ENCODE measurements at regions of chr21 and their contacts with region 1.

Region 1: GRCh38 chr21:45019076-45019956 is 55.1 kb upstream of the ADARB1 start:
- DNase-seq: peak in 4 of 5 donors; percentile 30 to 64 (median 57)
- ATAC-seq: peak in 3 of 4 donors; percentile 28 to 68 (median 46)
- H3K4me3 ChIP-seq: peak overlapping the region; percentile 7 to 66 (median 46)
- H3K27ac ChIP-seq: peak overlapping the region in 9 of 12 donors; percentile 21 to 83 (median 57)
- H3K4me1 ChIP-seq: peaks cover 0 to 26% (median 11%) of the 10 kb centered on the region in 12 donors
- H3K27me3 ChIP-seq: peaks cover 0 to 30% (median 0%) of the 10 kb centered on the region in 9 donors
- CTCF ChIP-seq: no peak
- POLR2A ChIP-seq: no peak

Region 2: DNA sequence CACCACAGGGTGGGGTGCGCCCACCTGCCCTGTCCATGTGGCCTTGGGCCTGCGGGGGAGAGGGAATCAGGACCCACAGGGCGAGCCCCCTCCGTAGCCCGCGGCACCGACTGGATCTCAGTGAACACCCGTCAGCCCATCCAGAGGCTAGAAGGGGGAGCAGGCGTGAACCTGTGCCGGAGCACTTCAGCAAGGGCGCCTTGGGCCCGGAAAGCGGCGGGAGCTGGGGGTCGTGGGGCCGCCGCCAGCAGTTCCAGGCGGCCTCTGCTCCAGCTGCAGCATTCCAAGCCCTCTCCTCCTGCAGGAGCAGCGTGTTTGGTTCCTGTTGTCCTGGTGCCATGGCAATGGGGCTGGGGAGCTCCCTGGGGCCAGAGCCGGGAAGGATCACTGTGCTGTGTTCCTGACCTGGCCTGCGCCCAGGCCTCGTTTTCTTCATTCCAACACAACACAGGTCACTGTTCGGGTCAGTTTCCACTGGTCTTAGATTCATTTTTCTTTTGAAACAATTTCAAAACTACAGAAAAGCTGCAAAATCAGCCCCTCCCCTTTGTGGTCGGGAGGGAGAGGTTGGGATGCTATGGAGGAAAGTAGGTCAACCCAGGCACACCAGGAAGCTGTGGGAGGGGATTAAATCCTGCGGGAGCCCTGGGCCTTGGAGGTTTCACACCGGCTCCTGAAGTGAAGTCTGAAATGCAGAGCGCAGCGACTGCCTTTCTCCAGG is 60.7 kb before region 1 on chr21:
- intact Hi-C with region 1: loop called in 1 of 10 experiments (anchors 5 kb)
- DNase-seq: peak; percentile 82 to 92 (median 88)
- ATAC-seq: peak; percentile 65 to 83 (median 66)
- H3K4me3 ChIP-seq: peak overlapping the region in 8 of 12 donors; percentile 11 to 30 (median 25)
- H3K27ac ChIP-seq: peak overlapping the region; percentile 24 to 86 (median 76)
- H3K4me1 ChIP-seq: peaks cover 13 to 92% (median 60%) of the 10 kb centered on the region in 12 donors
- H3K27me3 ChIP-seq: no peaks in the 10 kb centered on the region
- CTCF ChIP-seq: no peak
- POLR2A ChIP-seq: peak in 1 of 2 donors; percentile 36

Region 3: GRCh38 chr21:45050786-45051489 is 31.6 kb after region 1 on chr21:
- intact Hi-C with region 1: no loop called
- DNase-seq: no peak
- ATAC-seq: no peak
- H3K4me3 ChIP-seq: no peak overlapping the region
- H3K27ac ChIP-seq: no peak overlapping the region
- H3K4me1 ChIP-seq: peaks cover 0 to 6% (median 0%) of the 10 kb centered on the region in 12 donors
- H3K27me3 ChIP-seq: peaks cover 0 to 3% (median 0%) of the 10 kb centered on the region in 9 donors
- CTCF ChIP-seq: no peak
- POLR2A ChIP-seq: no peak

Region 4: DNA sequence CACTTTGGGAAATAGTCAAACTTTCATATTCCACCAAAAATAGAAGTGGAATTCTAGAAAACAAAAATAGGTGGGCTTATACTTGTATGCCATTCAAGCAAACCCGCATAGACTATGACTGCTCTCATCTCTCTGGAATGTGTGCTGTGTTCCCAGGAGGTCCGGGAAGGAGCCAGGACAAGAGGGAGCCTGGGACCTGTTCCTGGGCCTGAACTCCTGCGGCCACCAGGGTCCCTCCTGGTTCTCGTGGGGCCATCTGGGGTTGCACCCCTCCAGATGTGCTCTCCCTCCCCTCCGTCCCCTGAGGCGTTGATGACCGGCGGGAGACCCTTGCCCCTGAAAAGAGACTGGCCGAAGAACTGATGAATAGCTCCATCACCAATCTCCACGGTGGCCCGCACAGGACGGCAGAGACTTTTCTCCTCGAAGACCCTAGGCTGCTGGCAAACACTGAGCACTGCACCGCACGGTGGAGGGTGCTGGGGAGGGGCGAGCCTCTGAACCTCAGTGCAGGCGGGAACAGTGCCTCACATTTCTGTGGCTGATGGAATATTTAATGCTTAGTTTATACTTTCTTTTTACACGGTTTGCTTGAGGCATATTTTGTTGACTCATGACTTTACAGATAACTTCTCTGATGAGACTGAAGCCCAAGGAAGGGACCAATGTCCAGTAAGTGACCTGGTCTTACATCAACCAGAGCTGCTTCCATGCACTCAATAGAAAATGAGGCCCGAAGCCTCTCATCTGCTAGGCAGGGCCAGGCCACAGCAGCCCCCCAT is 45.5 kb after region 1 on chr21:
- intact Hi-C with region 1: loop called in 2 of 10 experiments (anchors 5 to 10 kb)
- DNase-seq: no peak
- ATAC-seq: peak in 2 of 4 donors; percentile 38 to 44
- H3K4me3 ChIP-seq: no peak overlapping the region
- H3K27ac ChIP-seq: peak overlapping the region in 4 of 12 donors; percentile 2 to 28 (median 14)
- H3K4me1 ChIP-seq: peaks cover 0 to 15% (median 4%) of the 10 kb centered on the region in 12 donors
- H3K27me3 ChIP-seq: no peaks in the 10 kb centered on the region
- CTCF ChIP-seq: no peak
- POLR2A ChIP-seq: no peak